ENCODE measurements at regions of chr11 and their contacts with region 1.

Region 1: GRCh38 chr11:46346886-46347636 is at the start of gene DGKZ:
- DNase-seq: peak; percentile 85
- ATAC-seq: peak; percentile 78
- H3K4me3 Mint-ChIP-seq: peak within 1 kb of the TSS; percentile 89
- H3K27ac Mint-ChIP-seq: peak within 1 kb of the TSS; percentile 94
- H3K4me1 Mint-ChIP-seq: peaks cover 71% of the 10 kb centered on the region
- H3K27me3 Mint-ChIP-seq: no peaks in the 10 kb centered on the region
- CTCF ChIP-seq: peak; percentile 72
- total RNA-seq, gene DGKZ: 94.4 to 94.9 TPM

Region 2: DNA sequence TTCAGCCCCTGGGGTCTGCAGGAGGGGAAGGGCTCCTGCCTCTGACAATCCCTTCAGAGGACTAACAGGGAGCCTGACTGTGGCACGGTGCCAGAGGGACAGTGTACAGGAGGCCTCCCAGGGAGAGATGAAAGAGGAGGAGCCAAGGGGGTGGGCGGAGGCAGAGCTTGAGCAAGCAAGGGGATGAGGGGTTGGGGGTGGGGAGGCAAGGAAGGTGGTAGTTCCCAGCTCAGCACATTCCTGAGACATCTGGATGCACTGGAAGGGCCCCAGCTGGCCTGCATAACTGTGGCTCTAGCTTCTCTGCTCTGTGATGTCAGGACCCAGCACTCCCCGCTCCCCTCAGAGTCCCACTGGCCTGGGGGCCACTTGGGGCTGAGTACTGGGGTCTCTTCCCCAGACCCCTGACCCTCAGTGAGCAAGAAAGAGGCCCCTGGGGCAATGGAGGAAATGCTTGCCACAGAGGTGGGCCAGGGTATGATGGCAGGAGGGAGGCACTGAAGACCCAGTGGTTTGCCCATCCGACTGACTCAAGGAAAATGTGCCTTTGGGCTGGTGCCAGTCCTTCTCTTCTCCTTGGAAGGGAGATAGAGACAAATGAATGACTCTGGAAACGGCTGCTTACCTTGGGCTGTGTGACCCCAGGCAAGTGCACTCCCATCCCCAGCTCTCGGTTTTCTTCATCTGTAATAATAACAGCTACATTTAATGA is 56.3 kb before region 1 on chr11:
- CTCF ChIA-PET with region 1: no interaction called
- POLR2A ChIA-PET with region 1: no interaction called
- intact Hi-C with region 1: no loop called
- DNase-seq: no peak
- ATAC-seq: no peak
- H3K4me3 Mint-ChIP-seq: no peak overlapping the region
- H3K27ac Mint-ChIP-seq: no peak overlapping the region
- H3K4me1 Mint-ChIP-seq: peaks cover 4% of the 10 kb centered on the region
- H3K27me3 Mint-ChIP-seq: peaks cover under 1% of the 10 kb centered on the region
- CTCF ChIP-seq: no peak

Region 3: GRCh38 chr11:46367244-46367915 is 20.3 kb after region 1 on chr11:
- CTCF ChIA-PET with region 1: interaction called, 480 read pairs
- POLR2A ChIA-PET with region 1: interaction called, 135 read pairs
- intact Hi-C with region 1: loop called (anchors 2 kb)
- DNase-seq: peak; percentile 88
- ATAC-seq: peak; percentile 89
- H3K4me3 Mint-ChIP-seq: peak overlapping the region; percentile 42
- H3K27ac Mint-ChIP-seq: peak overlapping the region; percentile 88
- H3K4me1 Mint-ChIP-seq: peaks cover 40% of the 10 kb centered on the region
- H3K27me3 Mint-ChIP-seq: no peaks in the 10 kb centered on the region
- CTCF ChIP-seq: peak; percentile 96

Region 4: GRCh38 chr11:46445920-46446771 is 99.1 kb after region 1 on chr11:
- CTCF ChIA-PET with region 1: no interaction called
- POLR2A ChIA-PET with region 1: no interaction called
- intact Hi-C with region 1: no loop called
- DNase-seq: no peak
- ATAC-seq: no peak
- H3K4me3 Mint-ChIP-seq: no peak overlapping the region
- H3K27ac Mint-ChIP-seq: no peak overlapping the region
- H3K4me1 Mint-ChIP-seq: peaks cover 5% of the 10 kb centered on the region
- H3K27me3 Mint-ChIP-seq: no peaks in the 10 kb centered on the region
- CTCF ChIP-seq: no peak

Region 5: GRCh38 chr11:46504817-46505613 is 158.0 kb after region 1 on chr11:
- CTCF ChIA-PET with region 1: no interaction called
- POLR2A ChIA-PET with region 1: no interaction called
- intact Hi-C with region 1: no loop called
- DNase-seq: no peak
- ATAC-seq: peak; percentile 75
- H3K4me3 Mint-ChIP-seq: no peak overlapping the region
- H3K27ac Mint-ChIP-seq: peak overlapping the region; percentile 53
- H3K4me1 Mint-ChIP-seq: peaks cover 16% of the 10 kb centered on the region
- H3K27me3 Mint-ChIP-seq: no peaks in the 10 kb centered on the region
- CTCF ChIP-seq: no peak